ENCODE measurements at regions of chr4 and their contacts with region 1.

Region 1: DNA sequence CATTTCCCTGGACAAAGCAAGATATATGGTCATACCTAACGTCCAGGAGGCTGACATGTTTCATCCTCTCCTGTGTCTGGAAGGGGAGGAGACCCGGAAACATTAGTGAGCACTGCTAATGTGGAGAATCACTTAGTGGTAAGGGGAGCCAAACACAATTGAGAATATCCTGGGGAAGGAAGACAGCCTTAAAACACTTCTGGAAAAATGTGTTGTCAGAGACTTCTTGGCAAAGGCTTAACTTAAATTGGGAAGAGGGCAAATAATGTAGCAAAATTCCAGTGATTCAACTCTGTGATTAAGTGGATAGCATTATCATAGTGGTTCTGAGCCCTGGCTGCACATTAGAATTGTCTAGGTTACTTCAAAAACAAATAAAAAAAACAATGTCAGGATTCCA is 39.5 kb downstream of the SPARCL1 start:
- DNase-seq: no peak
- H3K4me3 ChIP-seq: no peak overlapping the region
- H3K27ac ChIP-seq: no peak overlapping the region
- H3K4me1 ChIP-seq: no peaks in the 10 kb centered on the region
- H3K27me3 ChIP-seq: no peaks in the 10 kb centered on the region

Region 2: GRCh38 chr4:87399148-87399547 is 90.5 kb before region 1 on chr4:
- CTCF ChIA-PET with region 1: no interaction called
- POLR2A ChIA-PET with region 1: no interaction called
- DNase-seq: no peak
- H3K4me3 ChIP-seq: no peak overlapping the region
- H3K27ac ChIP-seq: no peak overlapping the region
- H3K4me1 ChIP-seq: no peaks in the 10 kb centered on the region
- H3K27me3 ChIP-seq: no peaks in the 10 kb centered on the region

Region 3: DNA sequence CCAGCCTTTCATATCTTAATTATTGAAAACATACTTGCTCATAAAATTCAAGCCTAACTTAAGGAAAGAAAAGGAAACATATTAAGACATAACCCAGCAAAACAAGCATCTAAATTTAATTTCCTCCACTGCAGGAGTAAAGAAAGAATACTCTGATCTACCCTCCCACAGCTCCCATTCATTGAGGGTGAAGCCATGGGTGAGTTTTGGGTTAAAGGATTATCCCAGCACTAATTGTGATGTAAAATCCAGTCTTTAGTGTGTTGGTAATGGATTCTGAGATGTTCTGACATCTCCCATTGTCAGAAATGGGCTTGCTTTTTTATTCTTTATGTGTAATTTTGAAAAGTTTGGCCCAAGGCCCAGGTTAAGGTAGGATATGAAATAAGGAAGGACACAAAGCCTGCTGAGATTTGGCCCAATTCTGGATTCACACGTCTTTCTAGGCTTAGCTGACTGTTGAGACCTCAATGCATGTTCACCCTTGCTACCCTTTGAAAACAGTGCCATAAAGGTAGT is 10.9 kb before region 1 on chr4:
- CTCF ChIA-PET with region 1: interaction called, 10 read pairs
- POLR2A ChIA-PET with region 1: no interaction called
- DNase-seq: no peak
- H3K4me3 ChIP-seq: no peak overlapping the region
- H3K27ac ChIP-seq: no peak overlapping the region
- H3K4me1 ChIP-seq: no peaks in the 10 kb centered on the region
- H3K27me3 ChIP-seq: no peaks in the 10 kb centered on the region

Region 4: DNA sequence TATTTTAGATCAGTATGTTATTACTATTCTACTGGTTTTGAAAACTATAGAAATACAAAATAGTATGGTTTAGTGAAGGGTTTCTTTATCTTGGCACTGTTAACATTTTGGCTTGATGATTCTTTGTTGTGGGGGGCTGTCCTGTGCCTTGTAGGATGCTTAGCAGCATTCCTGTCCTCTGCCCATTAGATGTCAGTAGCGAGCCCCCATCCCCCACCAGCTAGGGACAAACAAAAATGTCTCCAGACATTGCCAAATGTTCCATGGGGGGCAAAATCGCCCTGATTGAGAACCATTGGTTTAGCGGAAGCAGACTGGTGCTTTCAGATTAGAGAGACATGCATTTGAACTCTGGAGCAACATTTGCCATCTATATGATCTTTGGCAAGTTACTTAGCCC is 16.2 kb after region 1 on chr4:
- CTCF ChIA-PET with region 1: no interaction called
- POLR2A ChIA-PET with region 1: no interaction called
- DNase-seq: no peak
- H3K4me3 ChIP-seq: no peak overlapping the region
- H3K27ac ChIP-seq: no peak overlapping the region
- H3K4me1 ChIP-seq: no peaks in the 10 kb centered on the region
- H3K27me3 ChIP-seq: no peaks in the 10 kb centered on the region

Measured in common myeloid progenitor, CD34-positive (primary cell).